Caco-2 (cell line): ENCODE measurements at regions of chr1 and their contacts with region 1.

Region 1: GRCh38 chr1:178885869-178886268 is 15.0 kb upstream of the ANGPTL1 start:
- DNase-seq: peak in 1 of 2 experiments; percentile 11
- H3K4me3 ChIP-seq: no peak overlapping the region
- H3K4me3 Mint-ChIP-seq: no peak overlapping the region
- H3K27ac Mint-ChIP-seq: no peak overlapping the region
- H3K4me1 ChIP-seq: no peaks in the 10 kb centered on the region
- H3K4me1 Mint-ChIP-seq: no peaks in the 10 kb centered on the region
- H3K27me3 ChIP-seq: no peaks in the 10 kb centered on the region
- H3K27me3 Mint-ChIP-seq: no peaks in the 10 kb centered on the region
- CTCF ChIP-seq: peak in 1 of 2 experiments; percentile 39

Region 2: GRCh38 chr1:178784131-178784536 is 101.7 kb before region 1 on chr1:
- CTCF ChIA-PET with region 1: no interaction called
- POLR2A ChIA-PET with region 1: no interaction called
- intact Hi-C with region 1: loop called (anchors 10 kb)
- DNase-seq: no peak
- H3K4me3 ChIP-seq: no peak overlapping the region
- H3K4me3 Mint-ChIP-seq: no peak overlapping the region
- H3K27ac Mint-ChIP-seq: no peak overlapping the region
- H3K4me1 ChIP-seq: peaks cover 9% of the 10 kb centered on the region; the same call in 1 of the 2 replicates
- H3K4me1 Mint-ChIP-seq: peaks cover 9% of the 10 kb centered on the region
- H3K27me3 ChIP-seq: no peaks in the 10 kb centered on the region
- H3K27me3 Mint-ChIP-seq: no peaks in the 10 kb centered on the region
- CTCF ChIP-seq: no peak

Region 3: GRCh38 chr1:178847396-178847849 is 38.4 kb before region 1 on chr1:
- CTCF ChIA-PET with region 1: no interaction called
- POLR2A ChIA-PET with region 1: no interaction called
- intact Hi-C with region 1: no loop called
- DNase-seq: peak in 1 of 2 experiments; percentile 7
- H3K4me3 ChIP-seq: no peak overlapping the region
- H3K4me3 Mint-ChIP-seq: no peak overlapping the region
- H3K27ac Mint-ChIP-seq: no peak overlapping the region
- H3K4me1 ChIP-seq: peaks cover 3% of the 10 kb centered on the region; the same call in 1 of the 2 replicates
- H3K4me1 Mint-ChIP-seq: no peaks in the 10 kb centered on the region
- H3K27me3 ChIP-seq: no peaks in the 10 kb centered on the region
- H3K27me3 Mint-ChIP-seq: no peaks in the 10 kb centered on the region
- CTCF ChIP-seq: no peak